ENCODE measurements at regions of chr19 and their contacts with region 1.

Region 1: GRCh38 chr19:48993175-48994034 is at the starts of genes GYS1 and RUVBL2:
- DNase-seq: peak; percentile 99
- H3K4me3 ChIP-seq: peak within 1 kb of the TSS; percentile 96
- H3K27ac ChIP-seq: peak within 1 kb of the TSS; percentile 68
- H3K27me3 ChIP-seq: no peaks in the 10 kb centered on the region
- CTCF ChIP-seq: peak; percentile 88
- polyA plus RNA-seq, gene GYS1: 19.5 and 24.1 TPM in 2 replicates
- polyA plus RNA-seq, gene RUVBL2: 107 and 131 TPM in 2 replicates

Region 2: GRCh38 chr19:48918801-48919247 is 74.6 kb before region 1 on chr19:
- CTCF ChIA-PET with region 1: no interaction called
- POLR2A ChIA-PET with region 1: no interaction called
- DNase-seq: no peak
- H3K4me3 ChIP-seq: no peak overlapping the region
- H3K27ac ChIP-seq: no peak overlapping the region
- H3K27me3 ChIP-seq: no peaks in the 10 kb centered on the region
- CTCF ChIP-seq: no peak

Region 3: DNA sequence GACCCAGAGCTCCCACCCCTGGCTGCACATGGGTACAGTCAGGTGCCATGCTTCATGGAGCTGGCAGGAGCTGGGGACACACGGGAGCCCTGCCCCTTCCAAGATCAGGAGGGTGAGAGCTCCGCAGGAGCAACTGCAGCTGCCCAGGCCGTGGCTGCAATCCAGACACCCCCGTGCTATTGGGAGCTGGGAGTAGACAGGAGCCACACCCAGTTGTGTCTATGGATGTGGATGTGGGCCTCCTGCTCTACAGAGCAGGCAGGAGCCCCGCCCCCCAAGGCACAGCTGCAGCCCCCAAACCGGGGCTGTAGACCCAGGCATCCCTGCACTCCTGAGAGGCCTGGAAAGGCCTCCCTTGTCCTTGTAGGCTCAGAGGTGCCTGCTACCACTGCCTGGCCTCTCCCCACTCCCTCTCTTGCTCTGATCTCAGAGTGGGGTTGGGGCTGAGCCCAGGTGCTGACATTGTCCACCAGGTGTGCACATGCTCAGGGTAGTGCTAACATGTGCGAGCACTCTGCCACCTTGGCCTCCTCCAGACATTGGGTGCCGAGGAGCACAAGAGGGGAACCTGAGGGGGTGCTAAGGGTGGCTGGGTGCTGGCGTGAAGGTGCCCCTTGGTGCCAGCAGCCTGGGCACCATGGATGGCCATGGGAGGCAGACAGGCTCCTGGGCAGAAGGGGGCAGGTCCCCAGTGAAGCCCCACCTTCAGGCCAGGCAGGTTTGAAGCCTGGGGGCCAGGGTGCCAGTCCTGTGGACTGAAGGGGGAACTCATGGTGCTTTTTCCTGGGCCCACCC is 46.7 kb before region 1 on chr19:
- CTCF ChIA-PET with region 1: no interaction called
- POLR2A ChIA-PET with region 1: no interaction called
- DNase-seq: no peak
- H3K4me3 ChIP-seq: no peak overlapping the region
- H3K27ac ChIP-seq: no peak overlapping the region
- H3K27me3 ChIP-seq: no peaks in the 10 kb centered on the region
- CTCF ChIP-seq: no peak

Region 4: GRCh38 chr19:48965040-48965805 is 28.2 kb before region 1 on chr19 and contains the start of gene FTL:
- CTCF ChIA-PET with region 1: interaction called, 11 read pairs
- POLR2A ChIA-PET with region 1: interaction called, 15 read pairs
- DNase-seq: peak; percentile 93
- H3K4me3 ChIP-seq: peak within 1 kb of the TSS; percentile 100
- H3K27ac ChIP-seq: peak within 1 kb of the TSS; percentile 98
- H3K27me3 ChIP-seq: no peaks in the 10 kb centered on the region
- CTCF ChIP-seq: no peak
- polyA plus RNA-seq, gene FTL: 3,644 and 5,326 TPM in 2 replicates

Region 5: GRCh38 chr19:48975947-48976847 is 17.2 kb before region 1 on chr19:
- CTCF ChIA-PET with region 1: interaction called, 61 read pairs
- POLR2A ChIA-PET with region 1: interaction called, 22 read pairs
- DNase-seq: no peak
- H3K4me3 ChIP-seq: no peak overlapping the region
- H3K27ac ChIP-seq: no peak overlapping the region
- H3K27me3 ChIP-seq: no peaks in the 10 kb centered on the region
- CTCF ChIP-seq: no peak

Region 6: DNA sequence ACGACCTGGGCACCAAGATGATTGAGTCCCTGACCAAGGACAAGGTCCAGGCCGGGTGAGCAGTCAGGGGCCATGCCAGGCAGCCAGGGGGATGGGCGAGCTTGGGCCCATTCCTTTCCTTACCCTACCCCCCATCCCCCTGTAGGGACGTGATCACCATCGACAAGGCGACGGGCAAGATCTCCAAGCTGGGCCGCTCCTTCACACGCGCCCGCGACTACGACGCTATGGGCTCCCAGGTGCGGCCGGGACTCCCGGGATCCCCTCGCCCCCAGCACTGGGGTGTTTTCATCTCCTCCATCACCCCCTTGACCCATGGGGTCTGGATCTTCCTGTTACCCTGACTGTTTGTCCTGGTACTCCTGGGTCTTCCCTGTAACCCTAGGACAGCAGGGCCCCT is 16.4 kb after region 1 on chr19:
- CTCF ChIA-PET with region 1: interaction called, 15 read pairs
- POLR2A ChIA-PET with region 1: interaction called, 4 read pairs
- DNase-seq: no peak
- H3K4me3 ChIP-seq: no peak overlapping the region
- H3K27ac ChIP-seq: no peak overlapping the region
- H3K27me3 ChIP-seq: no peaks in the 10 kb centered on the region
- CTCF ChIP-seq: no peak

Measured in AG04450 (cell line).